ENCODE measurements at regions of chr1 and their contacts with region 1.

Region 1: GRCh38 chr1:197915862-197916499 is 1.2 kb upstream of the LHX9 start:
- DNase-seq: peak; percentile 55
- H3K4me3 ChIP-seq: peak overlapping the region in 2 of 3 experiments; percentile 13 to 15
- H3K27ac ChIP-seq: no peak overlapping the region
- H3K4me1 ChIP-seq: peaks cover 44% of the 10 kb centered on the region
- H3K27me3 ChIP-seq: peaks cover 95 to 99% of the 10 kb centered on the region in 2 experiments
- CTCF ChIP-seq: peak; percentile 54 to 78
- POLR2A ChIP-seq: no peak

Region 2: DNA sequence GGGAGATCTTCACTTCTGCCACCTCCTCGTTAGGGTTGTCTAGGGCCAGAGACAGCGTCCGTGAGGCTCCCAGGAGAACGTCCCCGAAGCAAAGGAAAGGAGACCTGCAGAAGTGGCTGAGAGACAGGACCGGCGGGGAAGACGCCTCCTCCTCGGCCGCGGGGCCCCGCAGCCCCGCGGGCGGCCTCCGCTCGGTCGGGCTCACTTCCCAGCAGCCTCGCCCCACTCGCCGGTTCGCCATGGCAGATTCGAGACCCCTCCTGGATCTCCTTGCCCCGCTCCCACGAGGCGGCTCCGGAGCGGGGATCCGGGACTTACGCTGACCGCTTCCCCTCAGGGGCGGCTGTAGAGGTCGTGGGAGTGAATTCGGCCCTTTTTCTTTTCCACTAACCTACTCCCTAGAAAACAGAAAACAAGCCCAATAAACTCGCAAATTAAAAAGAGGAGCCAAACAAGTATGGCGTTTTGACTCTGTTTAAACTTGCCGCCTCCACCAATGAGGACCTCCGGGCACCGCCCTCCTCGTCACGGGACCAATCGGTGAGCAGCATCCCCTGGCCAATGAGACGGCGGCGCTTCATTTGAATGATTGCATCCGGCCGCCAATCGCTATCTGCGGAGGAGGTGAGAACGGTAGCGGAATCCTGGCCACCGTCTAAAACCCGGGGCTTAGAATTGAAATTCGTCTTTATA is 769.6 kb before region 1 on chr1 and contains the start of gene ASPM:
- CTCF ChIA-PET with region 1: no interaction called
- POLR2A ChIA-PET with region 1: no interaction called
- dilution Hi-C with region 1: no loop called
- intact Hi-C with region 1: loop called (anchors 5 kb)
- DNase-seq: peak; percentile 96
- H3K4me3 ChIP-seq: peak within 1 kb of the TSS; percentile 63 to 88 (median 80)
- H3K27ac ChIP-seq: peak within 1 kb of the TSS; percentile 50
- H3K4me1 ChIP-seq: peaks cover 12% of the 10 kb centered on the region
- H3K27me3 ChIP-seq: no peaks in the 10 kb centered on the region
- CTCF ChIP-seq: no peak
- POLR2A ChIP-seq: peak; percentile 4
- total RNA-seq, gene ASPM: 44.6 and 55.1 TPM in 2 replicates

Region 3: GRCh38 chr1:197614916-197615692 is 300.9 kb before region 1 on chr1:
- CTCF ChIA-PET with region 1: interaction called, 62 read pairs
- POLR2A ChIA-PET with region 1: no interaction called
- dilution Hi-C with region 1: no loop called
- intact Hi-C with region 1: loop called (anchors 2 kb)
- DNase-seq: peak; percentile 55
- H3K4me3 ChIP-seq: no peak overlapping the region
- H3K27ac ChIP-seq: no peak overlapping the region
- H3K4me1 ChIP-seq: no peaks in the 10 kb centered on the region
- H3K27me3 ChIP-seq: no peaks in the 10 kb centered on the region
- CTCF ChIP-seq: peak; percentile 51 to 57
- POLR2A ChIP-seq: no peak

Region 4: GRCh38 chr1:197745911-197746310 is 170.1 kb before region 1 on chr1:
- CTCF ChIA-PET with region 1: no interaction called
- POLR2A ChIA-PET with region 1: no interaction called
- dilution Hi-C with region 1: no loop called
- intact Hi-C with region 1: no loop called
- DNase-seq: no peak
- H3K4me3 ChIP-seq: no peak overlapping the region
- H3K27ac ChIP-seq: no peak overlapping the region
- H3K4me1 ChIP-seq: no peaks in the 10 kb centered on the region
- H3K27me3 ChIP-seq: no peaks in the 10 kb centered on the region
- CTCF ChIP-seq: no peak
- POLR2A ChIP-seq: no peak

Region 5: GRCh38 chr1:197868751-197869489 is 47.1 kb before region 1 on chr1:
- CTCF ChIA-PET with region 1: interaction called, 12 read pairs
- POLR2A ChIA-PET with region 1: no interaction called
- dilution Hi-C with region 1: no loop called
- intact Hi-C with region 1: no loop called
- DNase-seq: peak; percentile 56
- H3K4me3 ChIP-seq: no peak overlapping the region
- H3K27ac ChIP-seq: no peak overlapping the region
- H3K4me1 ChIP-seq: no peaks in the 10 kb centered on the region
- H3K27me3 ChIP-seq: no peaks in the 10 kb centered on the region
- CTCF ChIP-seq: peak; percentile 54 to 59
- POLR2A ChIP-seq: no peak

Region 6: DNA sequence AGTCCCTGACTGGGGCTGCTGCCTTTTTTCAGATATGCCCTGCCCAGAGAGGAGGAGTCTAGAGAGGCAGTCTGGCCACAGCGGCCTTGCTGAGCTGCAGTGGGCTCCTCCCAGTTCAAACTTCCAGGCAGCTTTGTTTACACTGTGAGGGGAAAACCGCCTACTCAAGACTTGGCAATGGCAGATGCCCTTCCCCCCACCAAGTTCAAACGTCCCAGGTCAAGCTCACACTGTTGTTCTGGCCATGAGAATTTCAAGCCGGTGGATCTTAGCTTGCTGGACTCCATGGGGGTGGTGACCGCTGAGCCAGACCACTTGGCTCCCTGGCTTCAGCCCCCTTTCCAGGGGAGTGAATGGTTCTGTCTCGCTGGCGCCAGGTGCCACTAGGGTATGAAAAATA is 31.8 kb before region 1 on chr1:
- CTCF ChIA-PET with region 1: no interaction called
- POLR2A ChIA-PET with region 1: no interaction called
- dilution Hi-C with region 1: no loop called
- intact Hi-C with region 1: no loop called
- DNase-seq: no peak
- H3K4me3 ChIP-seq: no peak overlapping the region
- H3K27ac ChIP-seq: no peak overlapping the region
- H3K4me1 ChIP-seq: no peaks in the 10 kb centered on the region
- H3K27me3 ChIP-seq: no peaks in the 10 kb centered on the region
- CTCF ChIP-seq: no peak
- POLR2A ChIP-seq: no peak

Region 7: GRCh38 chr1:197896301-197896700 is 19.7 kb before region 1 on chr1:
- CTCF ChIA-PET with region 1: no interaction called
- POLR2A ChIA-PET with region 1: no interaction called
- dilution Hi-C with region 1: no loop called
- intact Hi-C with region 1: no loop called
- DNase-seq: no peak
- H3K4me3 ChIP-seq: no peak overlapping the region
- H3K27ac ChIP-seq: no peak overlapping the region
- H3K4me1 ChIP-seq: no peaks in the 10 kb centered on the region
- H3K27me3 ChIP-seq: no peaks in the 10 kb centered on the region
- CTCF ChIP-seq: no peak
- POLR2A ChIP-seq: no peak

Region 8: GRCh38 chr1:198102454-198102827 is 186.5 kb after region 1 on chr1:
- CTCF ChIA-PET with region 1: no interaction called
- POLR2A ChIA-PET with region 1: no interaction called
- dilution Hi-C with region 1: no loop called
- intact Hi-C with region 1: no loop called
- DNase-seq: no peak
- H3K4me3 ChIP-seq: no peak overlapping the region
- H3K27ac ChIP-seq: no peak overlapping the region
- H3K4me1 ChIP-seq: no peaks in the 10 kb centered on the region
- H3K27me3 ChIP-seq: no peaks in the 10 kb centered on the region
- CTCF ChIP-seq: no peak
- POLR2A ChIP-seq: no peak

Region 9: GRCh38 chr1:198265073-198265661 is 349.2 kb after region 1 on chr1:
- CTCF ChIA-PET with region 1: no interaction called
- POLR2A ChIA-PET with region 1: no interaction called
- dilution Hi-C with region 1: no loop called
- intact Hi-C with region 1: loop called (anchors 5 kb)
- DNase-seq: peak; percentile 61
- H3K4me3 ChIP-seq: no peak overlapping the region
- H3K27ac ChIP-seq: no peak overlapping the region
- H3K4me1 ChIP-seq: peaks cover 42% of the 10 kb centered on the region
- H3K27me3 ChIP-seq: no peaks in the 10 kb centered on the region
- CTCF ChIP-seq: no peak
- POLR2A ChIP-seq: no peak

Measured in endothelial cell of umbilical vein (primary cell).